Activated CD4-positive, alpha-beta T cell treated with anti-CD3 and anti-CD28 coated beads, Interleukin-2, amount 10 ng/mL, durations not matched to agents 24 days and 14 days (primary cell): ENCODE measurements at regions of chr9 and their contacts with region 1.

Region 1: DNA sequence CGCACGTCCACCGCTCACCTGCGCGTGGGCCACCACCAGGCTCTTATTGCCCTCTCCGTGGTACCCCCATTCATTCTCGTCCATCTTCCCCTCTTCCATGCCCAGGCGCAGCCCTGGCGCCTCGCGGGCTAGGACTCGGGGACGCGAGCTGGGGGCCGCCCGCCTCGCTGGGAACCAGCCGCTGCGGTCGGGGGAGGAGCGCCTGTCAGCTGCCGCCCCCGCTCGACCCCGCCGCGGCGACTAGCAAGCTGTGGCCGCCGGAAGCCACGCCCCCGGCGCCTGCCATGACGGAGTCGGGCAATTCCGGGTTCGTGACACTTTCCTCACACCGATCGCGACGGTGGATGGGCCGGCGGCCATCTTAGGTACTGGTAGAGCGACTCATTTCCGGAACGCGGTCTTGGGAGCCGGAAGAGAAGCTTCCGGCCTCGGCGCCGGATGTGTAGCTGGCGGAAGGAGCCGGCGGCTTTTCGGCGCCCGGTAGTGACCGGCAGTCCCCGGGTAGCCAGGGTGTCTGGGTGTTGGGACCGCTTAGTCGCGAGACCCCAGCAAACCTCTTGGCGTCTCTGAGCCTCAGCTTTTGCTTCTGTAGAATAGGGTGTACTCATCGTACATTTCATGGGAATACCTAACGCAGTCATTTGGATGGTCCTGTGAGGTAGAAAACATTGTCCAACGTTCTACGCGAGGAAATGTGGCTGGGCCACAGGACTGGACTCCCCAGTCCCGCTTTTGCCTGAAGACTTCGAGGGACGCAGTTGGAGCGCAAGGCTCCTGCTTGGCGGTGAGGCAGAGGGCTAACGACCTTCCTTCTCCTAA is at the start of gene IPPK:
- DNase-seq: peak; percentile 99
- H3K4me3 Mint-ChIP-seq: peak within 1 kb of the TSS; percentile 95
- H3K27ac Mint-ChIP-seq: peak within 1 kb of the TSS; percentile 74
- H3K4me1 Mint-ChIP-seq: peaks cover 25% of the 10 kb centered on the region
- H3K27me3 Mint-ChIP-seq: no peaks in the 10 kb centered on the region
- total RNA-seq, gene IPPK: 13.5 and 15.6 TPM in 2 replicates

Region 2: DNA sequence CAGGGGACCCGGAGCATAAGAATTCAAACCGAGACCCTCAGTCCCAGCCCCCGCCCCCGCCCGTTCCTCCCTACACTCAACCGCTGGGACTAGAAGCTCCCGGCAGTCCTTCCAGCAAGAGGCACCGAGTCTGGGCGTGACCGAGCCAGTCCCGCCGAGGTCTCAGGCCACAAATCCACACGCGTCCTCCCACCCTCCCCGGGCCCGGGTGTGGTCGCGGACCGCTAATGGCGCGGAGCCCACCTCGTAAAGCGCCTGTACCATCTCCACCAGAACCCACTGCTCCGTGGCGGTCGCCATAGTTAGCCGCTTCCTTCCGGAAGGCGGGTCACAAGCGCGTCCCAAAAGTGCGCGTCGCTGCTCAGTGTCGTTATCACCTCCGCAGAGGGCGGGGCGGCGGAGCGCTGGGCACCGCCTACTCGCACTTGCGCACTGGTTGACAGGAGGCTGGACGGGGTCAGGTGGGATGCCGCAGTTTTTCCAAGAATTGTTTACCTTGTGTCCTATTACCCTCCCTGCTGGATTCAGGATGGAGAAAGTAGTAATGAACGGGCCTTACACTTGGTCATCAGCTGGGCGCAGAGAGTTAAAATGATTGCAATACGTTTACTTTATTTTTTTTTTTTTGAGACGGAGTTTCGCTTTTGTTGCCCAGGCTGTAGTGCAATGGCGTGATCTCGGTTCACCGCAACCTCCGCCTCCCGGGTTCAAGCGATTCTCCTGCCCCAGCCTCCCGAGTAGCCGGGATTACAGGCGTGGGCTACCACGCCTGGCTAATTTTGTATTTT is 554.8 kb before region 1 on chr9 and contains the start of gene SPTLC1:
- intact Hi-C with region 1: loop called (anchors 1 kb)
- DNase-seq: peak; percentile 99
- H3K4me3 Mint-ChIP-seq: peak within 1 kb of the TSS; percentile 97
- H3K27ac Mint-ChIP-seq: peak within 1 kb of the TSS; percentile 98
- H3K4me1 Mint-ChIP-seq: peaks cover 21% of the 10 kb centered on the region
- H3K27me3 Mint-ChIP-seq: peaks cover 2% of the 10 kb centered on the region
- total RNA-seq, gene SPTLC1: 62.5 and 64.9 TPM in 2 replicates

Region 3: DNA sequence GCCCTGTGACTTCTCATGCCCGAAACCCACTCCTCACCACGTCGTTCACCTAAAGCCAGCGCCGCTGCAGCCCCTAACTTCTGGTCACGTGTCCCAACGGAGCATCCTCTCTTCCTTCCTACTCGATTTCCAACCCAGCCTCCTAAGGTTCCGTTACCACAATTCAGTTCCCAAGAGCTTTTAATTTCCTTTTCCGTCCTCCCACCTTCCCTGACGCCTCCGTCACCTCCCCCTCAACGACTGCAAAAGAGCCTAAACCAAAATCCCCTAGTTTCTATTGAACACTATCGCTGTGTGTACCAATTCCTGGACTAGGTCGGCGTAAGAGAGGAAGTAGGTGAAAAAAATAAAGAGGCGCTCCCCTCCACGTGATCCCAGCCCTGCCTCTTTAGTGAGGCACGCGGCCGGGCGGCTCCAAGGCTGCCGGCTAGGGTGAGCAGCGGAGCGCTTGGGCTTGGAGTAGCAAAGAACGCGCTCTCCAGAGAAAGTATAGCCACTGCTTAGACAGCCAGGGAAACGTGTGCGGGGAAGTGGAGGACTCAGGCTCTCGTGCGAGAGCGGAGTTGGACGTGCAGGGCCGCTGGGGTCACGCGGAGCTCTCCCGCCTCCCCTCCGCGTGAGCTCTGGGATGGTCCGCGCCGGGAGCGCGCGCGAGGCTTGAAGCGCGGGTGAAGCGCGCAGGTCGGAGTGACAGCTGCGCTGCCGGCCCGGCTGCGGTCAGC is 344.7 kb before region 1 on chr9 and contains the starts of genes CENPP and NOL8:
- intact Hi-C with region 1: loop called (anchors 1 kb)
- DNase-seq: peak; percentile 95
- H3K4me3 Mint-ChIP-seq: peak within 1 kb of the TSS; percentile 98
- H3K27ac Mint-ChIP-seq: peak within 1 kb of the TSS; percentile 97
- H3K4me1 Mint-ChIP-seq: peaks cover 31% of the 10 kb centered on the region
- H3K27me3 Mint-ChIP-seq: no peaks in the 10 kb centered on the region
- total RNA-seq, gene CENPP: 26.9 and 27.5 TPM in 2 replicates
- total RNA-seq, gene NOL8: 84.9 and 90.9 TPM in 2 replicates

Region 4: GRCh38 chr9:92706216-92706940 is 36.3 kb after region 1 on chr9:
- intact Hi-C with region 1: loop called (anchors 2 kb)
- DNase-seq: peak; percentile 84
- H3K4me3 Mint-ChIP-seq: peak overlapping the region; percentile 4
- H3K27ac Mint-ChIP-seq: peak overlapping the region; percentile 37
- H3K4me1 Mint-ChIP-seq: peaks cover 26% of the 10 kb centered on the region
- H3K27me3 Mint-ChIP-seq: no peaks in the 10 kb centered on the region

Region 5: DNA sequence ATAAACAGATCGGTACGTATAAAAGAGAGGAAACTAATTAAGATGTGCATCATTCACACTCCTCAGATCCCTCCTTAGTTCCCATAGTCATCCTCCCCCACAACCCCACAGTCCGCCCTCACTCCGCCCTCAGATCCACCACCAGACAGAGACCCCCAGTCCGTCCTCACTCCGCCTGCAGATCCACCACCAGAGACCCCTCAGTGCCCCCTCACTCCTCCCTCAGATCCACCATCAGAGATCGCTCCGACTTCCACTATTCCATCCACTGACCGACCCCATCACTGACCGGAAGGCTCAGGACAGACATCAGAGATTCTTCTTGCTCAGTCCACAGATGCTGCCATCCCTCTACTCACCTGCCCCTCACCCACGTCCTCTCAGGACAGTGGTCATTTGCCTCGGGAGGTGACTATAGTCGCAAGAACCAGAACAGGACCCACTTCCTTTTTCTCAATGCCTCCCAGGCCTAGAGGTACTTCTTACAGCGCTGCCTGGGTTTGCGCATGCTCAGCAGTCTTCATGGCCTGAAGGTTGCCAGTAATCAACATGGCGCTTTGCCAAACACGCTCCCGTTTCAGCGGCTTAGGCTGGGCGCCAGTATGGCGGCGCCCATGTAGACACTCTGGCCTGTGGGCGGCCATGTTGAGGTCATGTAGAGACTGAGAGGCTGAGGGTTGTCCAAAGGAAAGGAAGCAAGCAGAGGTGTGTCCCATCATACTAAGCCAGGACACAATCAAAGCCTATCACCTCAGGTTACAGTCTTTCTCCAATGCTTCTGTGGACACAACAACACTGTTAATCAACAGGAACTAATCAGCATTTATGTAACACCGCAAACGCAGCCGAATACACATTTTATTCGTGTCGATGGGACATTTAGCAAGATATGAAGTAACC is 207.7 kb after region 1 on chr9 and contains the start of gene ZNF484:
- intact Hi-C with region 1: loop called (anchors 1 kb)
- DNase-seq: peak; percentile 98
- H3K4me3 Mint-ChIP-seq: peak within 1 kb of the TSS; percentile 98
- H3K27ac Mint-ChIP-seq: peak within 1 kb of the TSS; percentile 95
- H3K4me1 Mint-ChIP-seq: peaks cover 33% of the 10 kb centered on the region
- H3K27me3 Mint-ChIP-seq: no peaks in the 10 kb centered on the region
- total RNA-seq, gene ZNF484: 7.3 and 7.7 TPM in 2 replicates

Region 6: DNA sequence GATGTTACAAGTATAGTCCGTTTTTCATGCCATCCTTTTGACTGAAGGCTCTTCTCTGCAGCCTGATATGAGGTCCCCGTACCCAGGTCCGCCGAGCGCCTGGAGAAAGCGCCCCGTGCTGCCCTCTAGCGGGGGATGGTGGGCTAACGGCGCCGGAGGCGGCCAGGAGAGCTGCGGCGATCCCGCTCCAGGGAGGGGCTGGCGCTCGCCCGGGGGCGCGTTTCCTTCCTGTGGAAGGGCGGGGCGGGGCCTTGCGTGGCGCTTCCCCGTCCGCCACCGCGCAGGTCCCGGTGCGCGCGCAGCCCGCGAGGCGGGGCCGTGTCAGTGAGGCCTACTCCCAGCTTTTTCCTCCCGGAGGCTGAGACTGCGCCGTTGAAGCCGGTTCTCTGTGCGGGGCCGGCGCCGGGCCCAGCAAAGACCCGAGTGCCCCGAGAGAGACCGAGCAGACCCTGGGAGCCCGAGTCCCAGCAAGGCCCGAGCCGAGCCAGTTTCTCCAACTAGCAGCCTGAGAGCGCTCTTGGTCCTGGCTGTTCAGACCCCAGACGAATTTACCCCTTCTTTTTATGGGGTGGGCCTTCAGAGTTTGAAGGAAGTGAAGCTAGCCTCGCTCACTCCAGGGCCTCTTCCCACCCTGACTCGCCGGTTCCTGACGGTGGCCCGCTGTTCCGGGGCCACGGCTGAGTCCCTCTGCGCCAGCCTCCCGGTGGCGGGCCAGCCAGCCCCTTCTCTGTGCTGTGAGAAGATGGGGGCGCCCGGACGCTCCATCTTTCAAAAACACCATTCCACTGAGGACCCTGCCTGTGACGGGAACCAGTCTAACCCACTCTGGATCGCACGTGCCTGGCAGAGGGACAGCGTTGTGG is 896.5 kb after region 1 on chr9:
- intact Hi-C with region 1: loop called (anchors 1 kb)
- DNase-seq: peak; percentile 100
- H3K4me3 Mint-ChIP-seq: peak overlapping the region; percentile 89
- H3K27ac Mint-ChIP-seq: peak overlapping the region; percentile 93
- H3K4me1 Mint-ChIP-seq: peaks cover 20% of the 10 kb centered on the region
- H3K27me3 Mint-ChIP-seq: no peaks in the 10 kb centered on the region